Activated CD4-positive, alpha-beta memory T cell treated with anti-CD3 and anti-CD28 coated beads, Interleukin-2, amount 10 ng/mL, durations not matched to agents 7 days and 5 days (primary cell): ENCODE measurements at regions of chr9 and their contacts with region 1.

Region 1: DNA sequence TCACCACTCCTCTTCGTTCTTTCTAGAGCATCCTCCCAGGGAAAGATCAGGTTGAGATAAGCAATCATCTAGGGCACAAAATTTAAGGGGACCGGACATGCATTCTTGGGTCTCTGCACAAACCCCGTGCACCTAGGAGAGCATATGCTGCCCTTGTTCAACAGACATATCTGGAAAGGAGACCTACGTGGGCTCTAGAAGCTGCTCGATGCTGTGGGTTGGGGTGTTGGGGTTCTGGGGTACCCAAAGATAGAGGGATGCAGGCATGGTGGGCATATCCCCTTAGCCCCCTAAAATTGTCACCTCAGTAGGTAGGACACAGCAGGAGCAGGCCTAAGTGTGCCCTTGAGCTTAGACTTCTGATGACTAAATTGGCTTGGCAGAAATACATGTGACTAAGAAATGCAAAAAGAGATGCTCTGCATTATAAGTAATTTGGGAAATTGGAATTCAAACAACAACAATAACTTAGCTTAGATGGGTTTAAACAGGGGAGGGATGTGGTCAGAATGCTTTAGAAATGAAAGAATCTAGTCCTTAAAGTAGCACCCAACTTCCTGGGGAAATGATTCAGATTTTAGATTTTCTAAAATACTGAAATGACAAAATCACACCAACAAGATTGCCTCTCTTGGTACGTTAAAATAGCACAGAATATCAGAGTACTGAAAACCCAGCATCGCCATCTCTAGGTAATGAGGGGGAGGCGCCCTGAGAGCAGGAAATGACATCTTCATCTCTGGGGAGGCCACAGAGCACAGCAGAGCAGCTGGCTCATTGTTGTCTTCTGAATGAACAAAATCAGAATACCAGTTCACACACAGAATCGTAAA is 172.3 kb downstream of the GNA14 start:
- DNase-seq: peak; percentile 75
- H3K4me3 Mint-ChIP-seq: peak overlapping the region; percentile 54
- H3K27ac Mint-ChIP-seq: peak overlapping the region; percentile 99
- H3K4me1 Mint-ChIP-seq: peaks cover 40% of the 10 kb centered on the region
- H3K27me3 Mint-ChIP-seq: no peaks in the 10 kb centered on the region

Region 2: DNA sequence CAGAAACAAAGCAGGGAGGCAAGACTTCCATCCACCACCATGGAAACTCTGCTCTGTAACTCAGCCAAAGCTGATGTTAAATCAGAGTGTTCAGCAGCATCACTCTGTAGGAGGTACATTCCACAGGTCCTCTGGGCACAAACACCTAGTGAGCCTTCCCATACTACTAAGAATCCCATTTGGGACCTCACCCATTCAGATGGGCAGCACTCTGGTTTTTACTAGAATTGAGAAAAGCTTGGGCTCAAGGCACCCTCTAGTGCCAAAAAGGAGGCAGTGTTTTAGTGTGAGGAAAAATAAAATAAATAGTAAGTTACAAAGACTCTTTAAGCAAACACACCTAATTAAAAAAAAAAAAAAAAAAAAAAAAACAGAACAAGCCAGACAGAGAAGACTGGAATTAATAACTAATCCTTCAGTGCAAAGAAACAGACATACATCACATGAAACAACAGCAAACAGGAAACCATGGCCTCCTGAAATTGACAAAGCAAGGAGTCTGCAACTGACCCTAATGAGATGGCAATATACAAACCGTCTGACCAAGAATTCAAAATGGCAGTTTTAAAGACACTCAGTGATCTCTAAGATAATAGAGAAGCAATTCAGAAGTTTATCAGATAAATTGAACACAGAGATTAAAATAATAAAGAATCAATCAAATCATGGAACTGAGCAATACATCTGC is 12.7 kb after region 1 on chr9:
- CTCF ChIA-PET with region 1: interaction called, 8 read pairs
- POLR2A ChIA-PET with region 1: interaction called, 13 read pairs
- DNase-seq: no peak
- H3K4me3 Mint-ChIP-seq: peak overlapping the region; percentile 74
- H3K27ac Mint-ChIP-seq: no peak overlapping the region
- H3K4me1 Mint-ChIP-seq: peaks cover 34% of the 10 kb centered on the region
- H3K27me3 Mint-ChIP-seq: peaks cover 6% of the 10 kb centered on the region

Region 3: GRCh38 chr9:77556396-77556795 is 80.5 kb after region 1 on chr9:
- CTCF ChIA-PET with region 1: no interaction called
- POLR2A ChIA-PET with region 1: no interaction called
- DNase-seq: no peak
- H3K4me3 Mint-ChIP-seq: no peak overlapping the region
- H3K27ac Mint-ChIP-seq: no peak overlapping the region
- H3K4me1 Mint-ChIP-seq: no peaks in the 10 kb centered on the region
- H3K27me3 Mint-ChIP-seq: peaks cover 10% of the 10 kb centered on the region